ENCODE measurements at regions of chr2 and their contacts with region 1.

Region 1: GRCh38 chr2:119929537-119929936 is 83.3 kb upstream of the EPB41L5 start:
- DNase-seq: no peak
- H3K4me3 Mint-ChIP-seq: peak overlapping the region; percentile 65
- H3K27ac Mint-ChIP-seq: peak overlapping the region; percentile 71
- H3K4me1 Mint-ChIP-seq: peaks cover 65% of the 10 kb centered on the region
- H3K27me3 Mint-ChIP-seq: no peaks in the 10 kb centered on the region

Region 2: DNA sequence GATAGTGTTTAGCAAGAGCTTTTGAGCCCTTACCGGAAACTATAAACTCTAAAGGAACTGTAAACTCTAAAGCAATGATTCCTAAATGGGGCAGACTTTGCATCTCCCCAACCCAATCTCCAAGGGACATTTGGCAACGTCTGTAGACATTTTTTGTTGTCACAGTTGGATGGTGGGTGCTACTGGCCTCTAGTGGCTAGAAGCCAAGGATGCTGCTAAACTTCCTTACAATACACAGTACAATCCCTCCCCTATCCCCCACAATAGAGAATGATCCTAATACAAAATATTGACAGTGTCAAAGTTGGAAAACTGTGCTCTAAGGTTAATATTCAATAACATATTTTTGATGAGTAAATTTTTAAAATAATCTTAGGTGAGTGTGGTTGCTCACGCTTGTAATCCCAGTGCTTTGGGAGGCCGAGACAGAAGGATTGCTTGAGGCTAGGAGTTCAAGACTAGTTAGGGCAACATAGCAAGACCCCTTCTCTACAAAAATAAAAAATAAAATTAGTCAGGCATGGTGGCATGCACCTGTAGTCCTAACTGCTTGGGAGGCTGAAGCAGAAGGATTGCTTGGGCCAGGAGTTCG is 103.1 kb before region 1 on chr2:
- CTCF ChIA-PET with region 1: no interaction called
- POLR2A ChIA-PET with region 1: no interaction called
- intact Hi-C with region 1: loop called (anchors 5 kb)
- DNase-seq: peak; percentile 57
- H3K4me3 Mint-ChIP-seq: no peak overlapping the region
- H3K27ac Mint-ChIP-seq: no peak overlapping the region
- H3K4me1 Mint-ChIP-seq: peaks cover 42% of the 10 kb centered on the region
- H3K27me3 Mint-ChIP-seq: no peaks in the 10 kb centered on the region

Region 3: GRCh38 chr2:119862127-119862889 is 67.2 kb before region 1 on chr2:
- CTCF ChIA-PET with region 1: no interaction called
- POLR2A ChIA-PET with region 1: no interaction called
- intact Hi-C with region 1: loop called (anchors 2 kb)
- DNase-seq: no peak
- H3K4me3 Mint-ChIP-seq: no peak overlapping the region
- H3K27ac Mint-ChIP-seq: peak overlapping the region; percentile 5
- H3K4me1 Mint-ChIP-seq: peaks cover 61% of the 10 kb centered on the region
- H3K27me3 Mint-ChIP-seq: no peaks in the 10 kb centered on the region

Region 4: DNA sequence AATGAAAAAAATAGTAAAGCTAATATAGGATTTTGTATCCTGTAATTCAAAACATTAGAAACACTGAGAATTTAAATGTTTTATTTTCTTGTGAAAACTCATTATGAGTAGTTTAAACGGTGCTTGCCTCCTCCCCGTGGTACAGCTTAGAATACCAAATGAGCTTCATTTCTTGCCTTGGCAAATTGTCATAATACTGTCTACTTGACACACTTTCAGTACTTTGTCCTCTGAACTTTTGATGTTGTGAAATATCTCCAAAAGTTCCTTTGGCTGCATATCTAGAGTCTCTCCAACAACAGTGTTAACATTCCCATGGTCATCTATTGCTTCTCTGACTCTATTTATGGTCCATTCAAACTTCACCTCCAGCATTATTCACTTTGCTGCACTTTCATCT is 21.4 kb after region 1 on chr2:
- CTCF ChIA-PET with region 1: interaction called, 3 read pairs
- POLR2A ChIA-PET with region 1: no interaction called
- intact Hi-C with region 1: loop called (anchors 2 kb)
- DNase-seq: no peak
- H3K4me3 Mint-ChIP-seq: no peak overlapping the region
- H3K27ac Mint-ChIP-seq: no peak overlapping the region
- H3K4me1 Mint-ChIP-seq: peaks cover 35% of the 10 kb centered on the region
- H3K27me3 Mint-ChIP-seq: no peaks in the 10 kb centered on the region

Region 5: DNA sequence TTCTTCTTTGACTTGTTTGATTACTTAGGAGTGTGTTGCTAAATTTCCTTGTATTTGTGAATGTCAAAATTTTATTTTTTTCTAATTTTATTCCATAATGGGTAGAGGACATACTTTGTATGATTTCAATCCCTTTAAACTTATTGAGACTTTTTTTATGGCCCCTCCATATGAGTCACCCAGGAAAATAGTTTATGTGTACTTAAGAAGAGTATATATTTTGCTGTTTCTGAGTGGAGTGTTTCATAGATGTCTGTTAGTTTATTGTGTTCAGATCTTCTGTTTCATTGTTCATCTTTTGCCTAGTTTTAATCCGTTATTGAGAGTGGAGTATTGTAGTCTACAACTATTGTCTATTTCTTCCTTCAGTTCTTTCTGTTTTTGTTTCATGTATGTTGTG is 165.3 kb after region 1 on chr2:
- CTCF ChIA-PET with region 1: no interaction called
- POLR2A ChIA-PET with region 1: no interaction called
- intact Hi-C with region 1: no loop called
- DNase-seq: no peak
- H3K4me3 Mint-ChIP-seq: no peak overlapping the region
- H3K27ac Mint-ChIP-seq: no peak overlapping the region
- H3K4me1 Mint-ChIP-seq: no peaks in the 10 kb centered on the region
- H3K27me3 Mint-ChIP-seq: no peaks in the 10 kb centered on the region

Measured in activated CD4-positive, alpha-beta memory T cell treated with anti-CD3 and anti-CD28 coated beads for 36 hours (primary cell).